ENCODE measurements at regions of chrX and their contacts with region 1.

Region 1: DNA sequence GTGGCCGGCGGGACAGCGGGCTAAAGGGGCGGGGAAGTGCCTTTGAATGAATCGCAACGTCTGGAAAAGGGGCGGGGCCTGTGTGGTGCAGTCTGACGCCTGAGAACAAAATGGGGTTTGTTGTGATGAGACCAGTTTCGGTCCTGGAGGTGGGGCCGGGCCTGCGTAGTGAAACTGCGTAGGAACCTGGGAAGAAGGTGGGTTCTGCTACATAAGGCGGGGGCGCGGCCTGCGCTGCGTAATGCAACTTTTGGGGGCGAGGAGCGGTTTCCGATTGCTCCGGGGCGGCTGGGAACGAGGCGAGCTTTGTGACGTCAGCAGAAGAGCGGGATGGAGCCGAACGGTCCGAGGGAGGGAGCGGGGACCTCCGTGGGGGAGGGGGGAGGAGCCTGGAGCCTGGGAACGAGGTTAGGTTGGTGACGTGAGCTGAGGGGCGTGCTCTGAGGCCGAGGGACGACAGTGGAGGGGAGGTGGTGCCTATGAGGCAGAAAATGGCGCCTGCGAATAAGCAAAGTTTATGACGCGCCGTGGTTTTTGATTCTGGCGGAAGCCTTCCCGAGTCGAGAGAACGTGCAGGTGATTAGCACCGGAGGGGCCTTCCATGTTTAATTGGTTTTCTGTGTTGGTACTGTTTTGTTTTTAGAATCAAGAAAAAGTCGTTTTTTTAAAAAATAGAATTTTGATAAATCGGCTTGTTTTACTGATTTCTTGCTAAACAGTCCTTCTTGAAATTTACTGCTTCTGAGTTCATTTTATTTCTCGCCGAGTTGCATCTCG is 716 bp downstream of the USP11 start:
- DNase-seq: peak; percentile 97
- ATAC-seq: peak; percentile 93
- H3K4me3 ChIP-seq: peak overlapping the region; percentile 83
- H3K27ac ChIP-seq: peak overlapping the region; percentile 86
- H3K4me1 ChIP-seq: 0 out of 2 replicates have a peak, but pooled peaks cover 1% of the 10 kb centered on the region
- H3K27me3 ChIP-seq: peaks cover 9% of the 10 kb centered on the region
- CTCF ChIP-seq: no peak
- POLR2A ChIP-seq: peak; percentile 88
- RAD21 ChIP-seq: no peak

Region 2: DNA sequence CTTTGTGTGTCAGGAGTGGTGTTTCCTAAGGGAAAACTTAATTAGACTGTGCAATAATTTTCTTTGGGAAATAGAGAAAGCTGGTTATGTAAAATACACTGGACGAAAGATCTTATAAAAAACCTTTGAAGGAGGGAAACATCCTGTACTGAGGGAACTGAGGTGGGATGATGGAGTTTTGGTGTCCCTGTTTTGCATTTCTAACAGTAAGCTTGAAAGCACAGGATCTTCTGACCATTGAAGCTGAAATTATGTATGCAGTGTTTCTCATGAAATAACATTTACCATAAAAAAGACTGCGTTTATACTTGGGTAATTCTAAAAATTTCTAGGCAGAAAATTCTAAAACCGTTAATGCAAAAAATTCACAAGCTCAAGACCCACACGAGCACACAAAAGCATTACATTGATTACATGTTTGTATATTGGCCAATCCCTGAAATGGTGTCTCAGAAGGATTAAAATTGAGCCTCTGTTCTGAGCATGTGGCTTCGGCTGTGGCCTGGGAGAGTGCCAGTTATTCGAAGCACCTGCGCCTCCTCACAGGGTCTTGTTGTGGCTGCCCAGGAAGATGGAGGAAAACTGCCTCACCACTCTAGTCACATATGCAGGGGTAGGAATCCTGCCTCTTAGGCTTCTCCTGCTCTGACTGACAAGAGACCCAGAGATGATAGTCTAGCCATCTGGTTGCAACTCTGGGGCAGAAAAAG is 271.8 kb before region 1 on chrX:
- CTCF ChIA-PET with region 1: no interaction called
- POLR2A ChIA-PET with region 1: no interaction called
- dilution Hi-C with region 1: no loop called
- in situ Hi-C with region 1: no loop called
- intact Hi-C with region 1: no loop called
- DNase-seq: no peak
- ATAC-seq: no peak
- H3K4me3 ChIP-seq: no peak overlapping the region
- H3K27ac ChIP-seq: no peak overlapping the region
- H3K4me1 ChIP-seq: peaks cover 4% of the 10 kb centered on the region; the same call in 1 of the 2 replicates
- H3K27me3 ChIP-seq: peaks cover 11% of the 10 kb centered on the region
- CTCF ChIP-seq: no peak
- POLR2A ChIP-seq: no peak
- RAD21 ChIP-seq: no peak

Region 3: GRCh38 chrX:47179221-47179920 is 54.2 kb before region 1 on chrX:
- CTCF ChIA-PET with region 1: no interaction called
- POLR2A ChIA-PET with region 1: no interaction called
- dilution Hi-C with region 1: no loop called
- in situ Hi-C with region 1: no loop called
- intact Hi-C with region 1: no loop called
- DNase-seq: no peak
- ATAC-seq: peak; percentile 53
- H3K4me3 ChIP-seq: no peak overlapping the region
- H3K27ac ChIP-seq: no peak overlapping the region
- H3K4me1 ChIP-seq: no peaks in the 10 kb centered on the region
- H3K27me3 ChIP-seq: peaks cover 21% of the 10 kb centered on the region; the same call in 1 of the 2 replicates
- CTCF ChIP-seq: no peak
- POLR2A ChIP-seq: no peak
- RAD21 ChIP-seq: no peak

Region 4: DNA sequence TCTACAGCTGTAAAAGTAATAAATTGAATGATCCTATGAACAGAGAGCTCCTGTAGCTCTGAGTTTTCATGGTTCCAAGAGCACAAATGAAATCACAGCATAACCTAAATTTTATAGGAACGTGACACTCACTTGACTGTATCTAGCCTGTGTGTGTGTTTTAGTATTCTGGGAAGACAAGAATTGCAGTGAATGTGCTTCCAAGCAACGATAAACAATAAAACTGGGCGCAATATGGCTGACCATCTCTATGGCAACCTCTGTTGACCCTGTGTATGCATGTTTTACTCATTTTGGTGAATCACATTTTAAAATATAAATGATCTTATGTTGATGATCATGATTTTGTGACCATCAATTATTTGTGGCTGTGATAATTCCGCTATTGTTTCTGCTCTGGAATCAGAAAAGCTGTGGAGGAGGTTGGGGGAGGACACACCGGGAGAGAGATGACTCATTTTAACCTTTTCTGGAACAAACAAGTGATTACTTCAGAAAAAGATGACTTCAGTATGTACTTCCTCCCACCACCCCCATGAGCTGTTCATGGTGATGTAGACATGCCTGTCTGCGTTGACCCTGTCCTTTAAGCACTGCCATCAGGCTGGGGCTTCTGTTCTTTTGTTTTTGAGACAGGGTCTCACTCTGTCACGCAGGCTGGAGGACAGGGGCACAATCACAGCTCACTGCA is 31.1 kb after region 1 on chrX:
- CTCF ChIA-PET with region 1: no interaction called
- POLR2A ChIA-PET with region 1: interaction called, 11 read pairs
- dilution Hi-C with region 1: no loop called
- in situ Hi-C with region 1: no loop called
- intact Hi-C with region 1: no loop called
- DNase-seq: peak; percentile 62
- ATAC-seq: peak; percentile 46
- H3K4me3 ChIP-seq: no peak overlapping the region
- H3K27ac ChIP-seq: no peak overlapping the region
- H3K4me1 ChIP-seq: no peaks in the 10 kb centered on the region
- H3K27me3 ChIP-seq: peaks cover 8% of the 10 kb centered on the region
- CTCF ChIP-seq: no peak
- POLR2A ChIP-seq: no peak
- RAD21 ChIP-seq: no peak

Region 5: GRCh38 chrX:47311932-47312774 is 78.6 kb after region 1 on chrX:
- CTCF ChIA-PET with region 1: interaction called, 3 read pairs
- POLR2A ChIA-PET with region 1: no interaction called
- dilution Hi-C with region 1: no loop called
- in situ Hi-C with region 1: no loop called
- intact Hi-C with region 1: loop called (anchors 1 kb)
- DNase-seq: peak; percentile 63
- ATAC-seq: peak; percentile 78
- H3K4me3 ChIP-seq: no peak overlapping the region
- H3K27ac ChIP-seq: no peak overlapping the region
- H3K4me1 ChIP-seq: no peaks in the 10 kb centered on the region
- H3K27me3 ChIP-seq: peaks cover 5% of the 10 kb centered on the region; the same call in 1 of the 2 replicates
- CTCF ChIP-seq: peak; percentile 57
- POLR2A ChIP-seq: no peak
- RAD21 ChIP-seq: peak; percentile 55

Measured in IMR-90 (cell line).